Activated B cell treated with CpG ODN at 0.5 μM for 24 hours (primary cell): ENCODE measurements at regions of chr6 and their contacts with region 1.

Region 1: GRCh38 chr6:43769526-43770416 is at the start of gene VEGFA:
- DNase-seq: peak; percentile 85
- ATAC-seq: peak; percentile 71
- H3K4me3 Mint-ChIP-seq: peak within 1 kb of the TSS; percentile 94
- H3K27ac Mint-ChIP-seq: peak within 1 kb of the TSS; percentile 86
- H3K4me1 Mint-ChIP-seq: peaks cover 27% of the 10 kb centered on the region
- H3K27me3 Mint-ChIP-seq: peaks cover 16% of the 10 kb centered on the region
- CTCF ChIP-seq: peak; percentile 85
- total RNA-seq, gene VEGFA: 29.0 and 31.3 TPM in 2 replicates

Region 2: DNA sequence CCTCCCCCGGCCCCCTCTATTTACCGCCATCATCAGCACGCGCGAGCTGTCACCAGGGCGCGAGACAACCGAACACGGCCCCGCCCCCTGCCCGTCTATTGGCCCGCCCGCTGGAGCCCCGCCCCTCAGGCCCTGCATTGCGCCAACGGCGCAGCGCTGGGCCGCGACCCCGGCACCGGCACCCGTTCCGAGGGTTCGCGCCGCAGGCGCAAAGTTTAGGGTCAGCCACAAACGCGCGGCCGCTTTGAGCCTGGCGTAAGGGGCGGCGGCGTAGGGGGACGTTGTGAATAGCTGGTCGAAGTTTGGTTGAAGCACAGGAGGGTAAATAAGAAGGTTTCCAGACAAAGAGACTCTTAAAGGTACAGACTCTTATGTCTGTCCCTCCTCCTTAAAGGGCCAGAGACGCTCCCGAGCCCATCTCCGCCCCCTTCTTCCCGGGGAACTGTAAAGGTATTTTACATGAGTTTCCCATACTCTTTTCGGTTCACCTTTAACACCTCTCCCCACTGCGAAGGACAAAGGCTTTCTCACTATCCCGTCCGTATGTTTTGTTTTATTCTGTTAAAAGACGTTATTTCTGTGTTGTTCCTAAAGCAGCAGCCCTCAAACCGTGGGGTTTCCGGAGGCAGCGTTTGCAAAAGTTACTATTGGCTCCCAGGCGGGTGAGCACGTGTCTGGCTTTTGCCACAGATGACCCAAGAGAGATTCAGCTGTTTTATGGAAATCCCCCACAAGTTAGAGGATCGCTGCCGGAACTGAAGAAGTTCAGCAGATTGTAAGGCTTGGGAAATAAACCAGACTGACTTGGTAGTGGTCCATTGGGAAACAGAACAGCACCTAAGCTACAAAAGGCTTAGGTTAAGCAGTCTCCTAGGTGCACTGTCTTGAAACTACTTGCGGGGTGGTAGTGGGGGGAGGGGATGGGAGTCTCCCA is 1874.2 kb before region 1 on chr6 and contains the start of gene USP49:
- CTCF ChIA-PET with region 1: no interaction called
- POLR2A ChIA-PET with region 1: no interaction called
- intact Hi-C with region 1: loop called (anchors 5 kb)
- DNase-seq: peak; percentile 90
- ATAC-seq: peak; percentile 92
- H3K4me3 Mint-ChIP-seq: no peak within 1 kb of the TSS
- H3K27ac Mint-ChIP-seq: peak within 1 kb of the TSS; percentile 95
- H3K4me1 Mint-ChIP-seq: peaks cover 14% of the 10 kb centered on the region
- H3K27me3 Mint-ChIP-seq: no peaks in the 10 kb centered on the region
- CTCF ChIP-seq: no peak
- total RNA-seq, gene USP49: 7.7 and 8.0 TPM in 2 replicates

Region 3: DNA sequence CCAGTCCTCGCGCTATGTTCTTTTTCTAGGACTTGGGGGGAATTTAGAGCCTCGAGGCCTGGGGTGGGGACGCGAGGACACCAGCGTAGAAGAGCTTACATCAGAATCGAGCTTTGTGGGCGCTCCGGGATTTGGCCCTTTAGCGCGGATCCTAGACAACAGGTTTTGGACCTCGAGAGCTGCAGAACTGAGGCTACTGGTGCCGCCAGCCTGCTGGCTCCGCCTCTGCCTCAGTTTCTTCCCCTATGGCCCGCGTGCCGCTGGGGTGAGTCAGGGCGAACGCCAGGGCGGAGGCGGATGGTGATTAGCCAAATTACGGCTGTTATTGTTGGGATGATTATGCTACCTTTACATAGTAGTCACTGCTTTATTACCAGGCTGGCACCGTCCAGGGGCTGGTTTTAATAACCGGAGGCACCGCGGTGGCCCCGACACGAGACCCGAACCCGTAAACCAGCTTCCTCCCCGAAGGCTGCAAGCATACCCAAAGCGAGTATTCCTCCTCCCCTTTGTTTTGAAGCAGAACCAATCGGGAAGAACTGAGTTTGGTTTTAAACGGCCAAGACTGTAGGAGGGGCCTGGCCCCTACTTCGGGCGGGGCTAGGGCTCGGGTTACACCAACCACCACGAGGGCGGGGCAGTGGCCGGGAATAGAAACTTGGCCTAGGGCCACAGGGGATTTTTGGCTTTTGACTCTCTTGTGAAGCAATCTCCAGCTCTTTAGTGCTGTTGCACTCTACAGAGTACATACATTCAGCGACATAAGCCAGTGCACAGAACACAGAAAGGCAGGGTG is 140.1 kb before region 1 on chr6:
- CTCF ChIA-PET with region 1: interaction called, 3 read pairs
- POLR2A ChIA-PET with region 1: interaction called, 21 read pairs
- intact Hi-C with region 1: loop called (anchors 1 kb)
- DNase-seq: peak; percentile 87
- ATAC-seq: peak; percentile 70
- H3K4me3 Mint-ChIP-seq: peak overlapping the region; percentile 98
- H3K27ac Mint-ChIP-seq: peak overlapping the region; percentile 99
- H3K4me1 Mint-ChIP-seq: peaks cover 41% of the 10 kb centered on the region
- H3K27me3 Mint-ChIP-seq: no peaks in the 10 kb centered on the region
- CTCF ChIP-seq: no peak

Region 4: DNA sequence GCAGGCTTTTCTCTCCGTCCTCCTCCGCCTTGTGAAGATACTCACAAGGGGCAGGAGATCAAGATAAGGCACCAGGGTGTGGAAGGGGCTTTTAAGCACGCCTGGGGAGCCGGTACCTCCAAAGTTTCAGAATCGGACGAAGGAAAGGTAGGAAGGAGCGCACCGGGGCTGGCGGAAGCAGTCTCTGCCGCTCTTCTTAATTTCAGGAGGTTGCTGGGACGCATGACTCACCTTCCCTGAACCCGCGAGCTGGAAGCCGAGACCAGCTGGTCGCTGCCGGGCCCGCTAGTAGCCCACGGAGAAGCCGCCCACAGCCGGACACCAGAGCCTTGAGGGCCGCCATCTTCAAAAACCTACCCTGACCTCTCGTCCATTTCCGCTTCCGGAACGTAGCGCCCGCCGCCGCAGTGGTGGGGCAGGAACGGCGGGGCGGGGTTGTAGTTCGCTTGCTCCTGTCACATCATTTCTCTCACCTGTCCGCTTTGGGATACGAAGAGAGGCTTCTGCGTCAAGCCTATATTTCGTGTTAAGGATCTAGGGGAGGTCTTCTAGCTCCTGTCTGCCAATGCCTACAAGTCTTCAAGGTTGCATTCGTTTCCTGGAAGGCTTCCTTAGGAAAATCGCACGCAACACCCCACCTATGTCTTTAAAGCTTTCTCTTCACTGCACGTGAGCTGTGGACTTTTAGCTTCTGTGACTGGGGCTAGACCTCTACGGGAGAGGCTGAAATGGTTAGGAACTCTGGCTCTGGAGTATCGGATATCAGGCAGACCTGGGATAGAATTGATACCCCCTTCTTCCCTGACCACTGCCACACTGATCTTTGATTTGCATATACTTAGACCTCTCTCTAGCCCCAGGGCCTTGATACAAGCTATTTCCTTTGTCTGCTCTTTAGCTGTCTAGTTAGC is 82.1 kb before region 1 on chr6 and contains the start of gene MRPS18A:
- CTCF ChIA-PET with region 1: interaction called, 3 read pairs
- POLR2A ChIA-PET with region 1: interaction called, 7 read pairs
- intact Hi-C with region 1: loop called (anchors 5 kb)
- DNase-seq: peak; percentile 70
- ATAC-seq: peak; percentile 89
- H3K4me3 Mint-ChIP-seq: peak within 1 kb of the TSS; percentile 95
- H3K27ac Mint-ChIP-seq: peak within 1 kb of the TSS; percentile 85
- H3K4me1 Mint-ChIP-seq: peaks cover 52% of the 10 kb centered on the region
- H3K27me3 Mint-ChIP-seq: no peaks in the 10 kb centered on the region
- CTCF ChIP-seq: no peak
- total RNA-seq, gene MRPS18A: 57.0 and 59.1 TPM in 2 replicates

Region 5: GRCh38 chr6:43817192-43817591 is 47.4 kb after region 1 on chr6:
- CTCF ChIA-PET with region 1: interaction called, 5 read pairs
- POLR2A ChIA-PET with region 1: no interaction called
- intact Hi-C with region 1: loop called (anchors 1 kb)
- DNase-seq: no peak
- ATAC-seq: peak; percentile 71
- H3K4me3 Mint-ChIP-seq: no peak overlapping the region
- H3K27ac Mint-ChIP-seq: no peak overlapping the region
- H3K4me1 Mint-ChIP-seq: no peaks in the 10 kb centered on the region
- H3K27me3 Mint-ChIP-seq: peaks cover 19% of the 10 kb centered on the region
- CTCF ChIP-seq: no peak

Region 6: GRCh38 chr6:44127186-44128019 is 357.6 kb after region 1 on chr6 and contains the starts of genes MRPL14 and TMEM63B:
- CTCF ChIA-PET with region 1: no interaction called
- POLR2A ChIA-PET with region 1: interaction called, 3 read pairs
- intact Hi-C with region 1: loop called (anchors 2 kb)
- DNase-seq: peak; percentile 89
- ATAC-seq: peak; percentile 87
- H3K4me3 Mint-ChIP-seq: peak within 1 kb of the TSS; percentile 93
- H3K27ac Mint-ChIP-seq: peak within 1 kb of the TSS; percentile 95
- H3K4me1 Mint-ChIP-seq: peaks cover 50% of the 10 kb centered on the region
- H3K27me3 Mint-ChIP-seq: no peaks in the 10 kb centered on the region
- CTCF ChIP-seq: no peak
- total RNA-seq, gene MRPL14: 40.5 and 45.5 TPM in 2 replicates
- total RNA-seq, gene TMEM63B: 12.3 and 13.9 TPM in 2 replicates

Region 7: GRCh38 chr6:44338228-44339122 is 568.7 kb after region 1 on chr6:
- CTCF ChIA-PET with region 1: no interaction called
- POLR2A ChIA-PET with region 1: no interaction called
- intact Hi-C with region 1: loop called (anchors 5 kb)
- DNase-seq: peak; percentile 36
- ATAC-seq: peak; percentile 94
- H3K4me3 Mint-ChIP-seq: no peak overlapping the region
- H3K27ac Mint-ChIP-seq: no peak overlapping the region
- H3K4me1 Mint-ChIP-seq: no peaks in the 10 kb centered on the region
- H3K27me3 Mint-ChIP-seq: peaks cover 22% of the 10 kb centered on the region
- CTCF ChIP-seq: peak; percentile 58